Caco-2 (cell line): ENCODE measurements at regions of chr4 and their contacts with region 1.

Region 1: DNA sequence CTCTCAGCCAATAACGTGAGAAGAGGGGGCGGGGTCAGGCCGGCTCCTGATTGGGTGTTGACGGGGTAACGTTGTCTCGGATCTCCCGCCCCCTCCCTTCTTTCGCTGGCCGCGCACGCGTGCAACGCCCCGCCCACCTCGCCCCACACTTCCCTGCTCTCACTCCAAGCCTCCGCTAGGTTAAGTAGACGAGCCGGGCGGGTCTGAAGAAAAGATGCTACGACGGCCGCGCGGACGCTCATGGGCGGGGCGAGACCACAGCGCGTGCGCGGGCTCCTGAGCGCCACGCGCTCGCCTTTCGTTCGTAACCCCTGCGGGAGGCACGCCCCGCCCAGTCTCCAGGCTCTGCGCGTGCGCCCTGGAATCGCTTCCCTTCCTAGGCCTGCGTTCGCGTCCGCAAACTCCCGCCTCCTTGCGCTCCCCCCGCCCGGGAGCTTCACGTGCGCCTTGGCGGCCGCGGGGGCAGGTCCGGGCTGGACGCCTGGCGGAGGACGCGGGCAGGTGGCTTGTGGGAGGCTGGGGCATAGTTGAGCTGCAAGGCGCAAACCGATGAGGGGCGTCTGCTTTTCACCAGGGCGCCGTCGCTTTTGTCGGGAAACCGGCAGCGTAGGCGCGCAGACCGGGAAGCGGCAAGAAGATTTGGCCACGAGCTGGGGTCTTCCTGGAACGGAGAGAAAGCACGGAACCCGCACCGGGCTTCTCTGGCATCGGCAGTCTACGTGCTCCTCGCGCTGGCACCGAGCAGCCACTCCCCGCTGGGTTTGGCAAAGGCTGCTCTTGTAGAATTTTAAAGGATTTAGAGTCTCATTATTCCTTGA is 467 bp upstream of the PGRMC2 start:
- DNase-seq: peak; percentile 99
- H3K4me3 ChIP-seq: peak overlapping the region; percentile 92
- H3K4me3 Mint-ChIP-seq: peak overlapping the region; percentile 91
- H3K27ac Mint-ChIP-seq: peak overlapping the region; percentile 82
- H3K4me1 ChIP-seq: peaks cover 30% of the 10 kb centered on the region
- H3K4me1 Mint-ChIP-seq: peaks cover 29% of the 10 kb centered on the region
- H3K27me3 ChIP-seq: no peaks in the 10 kb centered on the region
- H3K27me3 Mint-ChIP-seq: no peaks in the 10 kb centered on the region
- CTCF ChIP-seq: peak in 1 of 2 experiments; percentile 34

Region 2: DNA sequence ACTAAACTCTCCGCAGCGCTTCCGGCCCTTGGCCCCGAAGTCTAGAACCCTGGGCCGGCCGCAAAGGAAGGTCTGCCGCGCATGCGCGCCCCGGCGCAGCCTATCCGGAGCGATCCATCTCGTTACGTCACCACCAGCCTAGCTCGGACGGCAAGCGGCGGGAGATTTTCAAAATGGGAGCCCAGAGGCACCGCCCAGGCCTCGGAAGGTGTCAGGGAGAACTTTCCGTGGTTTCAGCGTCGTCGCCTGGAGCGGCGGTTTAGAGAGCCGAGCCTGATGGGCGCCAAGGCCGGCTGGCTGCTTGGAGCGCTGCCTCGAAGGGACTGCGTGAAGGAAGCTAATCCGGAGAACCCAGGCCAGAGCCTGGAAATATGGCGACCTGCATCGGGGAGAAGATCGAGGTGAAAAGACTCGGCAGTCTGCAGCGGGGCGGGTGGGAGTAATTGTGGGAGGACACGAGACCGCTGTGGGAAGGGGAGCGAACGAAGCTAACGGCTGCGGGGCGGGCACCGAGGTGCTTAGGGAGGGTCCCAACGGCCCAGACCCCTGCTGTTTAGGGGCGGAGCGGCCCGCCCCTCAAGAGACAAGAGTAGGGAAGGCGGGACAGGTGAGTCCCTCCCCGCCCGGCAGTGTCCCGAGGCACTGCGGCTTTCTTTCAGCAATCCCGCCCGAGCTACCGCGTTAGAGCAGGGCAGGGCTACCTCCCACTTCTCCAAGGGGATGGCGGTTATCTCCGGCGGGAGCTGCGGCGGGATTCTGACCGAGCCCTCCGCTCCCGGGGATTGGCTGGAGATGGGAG is 407.1 kb before region 1 on chr4 and contains the start of gene PLK4:
- CTCF ChIA-PET with region 1: no interaction called
- POLR2A ChIA-PET with region 1: no interaction called
- intact Hi-C with region 1: loop called (anchors 5 kb)
- DNase-seq: peak; percentile 96
- H3K4me3 ChIP-seq: peak within 1 kb of the TSS; percentile 97
- H3K4me3 Mint-ChIP-seq: peak within 1 kb of the TSS; percentile 93
- H3K27ac Mint-ChIP-seq: peak within 1 kb of the TSS; percentile 99
- H3K4me1 ChIP-seq: no peaks in the 10 kb centered on the region; the same call in none of the 2 replicates
- H3K4me1 Mint-ChIP-seq: no peaks in the 10 kb centered on the region
- H3K27me3 ChIP-seq: no peaks in the 10 kb centered on the region
- H3K27me3 Mint-ChIP-seq: no peaks in the 10 kb centered on the region
- CTCF ChIP-seq: no peak
- total RNA-seq, gene PLK4: 28.2 and 31.1 TPM in 2 replicates

Region 3: GRCh38 chr4:128191115-128191781 is 96.8 kb before region 1 on chr4:
- CTCF ChIA-PET with region 1: no interaction called
- POLR2A ChIA-PET with region 1: no interaction called
- intact Hi-C with region 1: loop called (anchors 2 kb)
- DNase-seq: peak; percentile 59 to 65
- H3K4me3 ChIP-seq: no peak overlapping the region
- H3K4me3 Mint-ChIP-seq: no peak overlapping the region
- H3K27ac Mint-ChIP-seq: no peak overlapping the region
- H3K4me1 ChIP-seq: 0 out of 2 replicates have a peak, but pooled peaks cover 11% of the 10 kb centered on the region
- H3K4me1 Mint-ChIP-seq: peaks cover 15% of the 10 kb centered on the region
- H3K27me3 ChIP-seq: no peaks in the 10 kb centered on the region
- H3K27me3 Mint-ChIP-seq: no peaks in the 10 kb centered on the region
- CTCF ChIP-seq: peak; percentile 73 to 77

Region 4: GRCh38 chr4:128322995-128323394 is 34.9 kb after region 1 on chr4:
- CTCF ChIA-PET with region 1: interaction called, 4 read pairs
- POLR2A ChIA-PET with region 1: interaction called, 9 read pairs
- intact Hi-C with region 1: loop called (anchors 1 kb)
- DNase-seq: peak; percentile 73 to 82
- H3K4me3 ChIP-seq: no peak overlapping the region
- H3K4me3 Mint-ChIP-seq: no peak overlapping the region
- H3K27ac Mint-ChIP-seq: no peak overlapping the region
- H3K4me1 ChIP-seq: peaks cover 43% of the 10 kb centered on the region
- H3K4me1 Mint-ChIP-seq: peaks cover 5% of the 10 kb centered on the region
- H3K27me3 ChIP-seq: no peaks in the 10 kb centered on the region
- H3K27me3 Mint-ChIP-seq: no peaks in the 10 kb centered on the region
- CTCF ChIP-seq: no peak

Region 5: GRCh38 chr4:128427832-128428366 is 139.8 kb after region 1 on chr4:
- CTCF ChIA-PET with region 1: interaction called, 4 read pairs
- POLR2A ChIA-PET with region 1: no interaction called
- intact Hi-C with region 1: loop called (anchors 1 kb)
- DNase-seq: peak; percentile 72 to 82
- H3K4me3 ChIP-seq: no peak overlapping the region
- H3K4me3 Mint-ChIP-seq: no peak overlapping the region
- H3K27ac Mint-ChIP-seq: peak overlapping the region; percentile 67
- H3K4me1 ChIP-seq: peaks cover 20% of the 10 kb centered on the region
- H3K4me1 Mint-ChIP-seq: peaks cover 8% of the 10 kb centered on the region
- H3K27me3 ChIP-seq: no peaks in the 10 kb centered on the region
- H3K27me3 Mint-ChIP-seq: no peaks in the 10 kb centered on the region
- CTCF ChIP-seq: peak; percentile 25 to 39

Region 6: DNA sequence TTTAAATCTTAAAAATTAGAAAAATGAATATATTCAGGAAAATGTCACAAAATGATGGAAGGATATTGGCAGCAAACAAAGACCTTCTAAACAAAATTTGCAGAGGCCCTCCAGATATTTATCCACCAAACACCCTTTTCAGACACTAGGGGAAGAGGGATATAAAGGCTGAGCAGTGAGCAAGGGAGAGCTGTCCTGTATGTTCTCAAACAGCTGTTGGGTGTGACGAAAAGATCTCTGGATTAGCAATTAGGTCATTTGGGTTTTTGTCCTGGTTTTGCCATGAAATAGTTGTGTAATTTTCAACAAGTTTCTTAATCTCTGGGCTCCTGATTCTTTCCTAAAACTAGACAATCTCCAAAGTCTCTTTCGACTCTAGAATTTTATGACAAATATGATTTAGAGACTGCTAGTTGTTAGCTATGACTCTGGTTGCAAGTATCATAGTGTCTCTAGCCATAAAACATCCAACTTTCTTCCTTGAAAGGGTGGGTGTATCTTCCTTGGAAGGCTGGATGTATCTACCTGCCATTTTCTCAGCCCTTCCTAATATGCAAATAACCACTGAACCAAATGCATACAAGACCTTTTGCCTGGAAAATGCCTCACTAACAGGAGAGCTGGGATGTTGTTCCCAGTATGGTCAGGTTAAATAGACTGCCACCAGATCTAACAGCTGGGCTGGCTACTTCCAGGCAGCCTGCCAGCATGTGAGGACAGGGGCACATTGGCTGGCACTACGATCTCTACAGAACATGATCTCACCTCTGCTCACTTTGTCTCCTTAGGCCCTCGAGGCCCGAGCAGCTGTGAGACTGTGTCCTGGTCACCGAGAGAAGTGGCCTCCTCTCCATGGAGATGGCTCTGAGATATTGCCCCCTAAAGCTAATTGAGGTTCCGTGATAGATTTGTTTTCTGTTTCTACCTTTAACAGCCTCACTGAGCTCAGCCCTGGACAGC is 296.0 kb after region 1 on chr4:
- CTCF ChIA-PET with region 1: no interaction called
- POLR2A ChIA-PET with region 1: no interaction called
- intact Hi-C with region 1: no loop called
- DNase-seq: no peak
- H3K4me3 ChIP-seq: no peak overlapping the region
- H3K4me3 Mint-ChIP-seq: no peak overlapping the region
- H3K27ac Mint-ChIP-seq: no peak overlapping the region
- H3K4me1 ChIP-seq: no peaks in the 10 kb centered on the region
- H3K4me1 Mint-ChIP-seq: no peaks in the 10 kb centered on the region
- H3K27me3 ChIP-seq: no peaks in the 10 kb centered on the region
- H3K27me3 Mint-ChIP-seq: no peaks in the 10 kb centered on the region
- CTCF ChIP-seq: no peak

Region 7: GRCh38 chr4:128809477-128810330 is 521.6 kb after region 1 on chr4 and contains the start of gene JADE1:
- CTCF ChIA-PET with region 1: no interaction called
- POLR2A ChIA-PET with region 1: no interaction called
- intact Hi-C with region 1: loop called (anchors 1 kb)
- DNase-seq: peak; percentile 93 to 95
- H3K4me3 ChIP-seq: peak within 1 kb of the TSS; percentile 67
- H3K4me3 Mint-ChIP-seq: peak within 1 kb of the TSS; percentile 93
- H3K27ac Mint-ChIP-seq: peak within 1 kb of the TSS; percentile 97
- H3K4me1 ChIP-seq: peaks cover 26% of the 10 kb centered on the region
- H3K4me1 Mint-ChIP-seq: peaks cover 8% of the 10 kb centered on the region
- H3K27me3 ChIP-seq: no peaks in the 10 kb centered on the region
- H3K27me3 Mint-ChIP-seq: no peaks in the 10 kb centered on the region
- CTCF ChIP-seq: peak; percentile 57 to 78
- total RNA-seq, gene JADE1: 30.2 and 32.5 TPM in 2 replicates